Sigmoid colon (tissue), 7 donors: ENCODE measurements at regions of chr17 and their contacts with region 1.

Region 1: DNA sequence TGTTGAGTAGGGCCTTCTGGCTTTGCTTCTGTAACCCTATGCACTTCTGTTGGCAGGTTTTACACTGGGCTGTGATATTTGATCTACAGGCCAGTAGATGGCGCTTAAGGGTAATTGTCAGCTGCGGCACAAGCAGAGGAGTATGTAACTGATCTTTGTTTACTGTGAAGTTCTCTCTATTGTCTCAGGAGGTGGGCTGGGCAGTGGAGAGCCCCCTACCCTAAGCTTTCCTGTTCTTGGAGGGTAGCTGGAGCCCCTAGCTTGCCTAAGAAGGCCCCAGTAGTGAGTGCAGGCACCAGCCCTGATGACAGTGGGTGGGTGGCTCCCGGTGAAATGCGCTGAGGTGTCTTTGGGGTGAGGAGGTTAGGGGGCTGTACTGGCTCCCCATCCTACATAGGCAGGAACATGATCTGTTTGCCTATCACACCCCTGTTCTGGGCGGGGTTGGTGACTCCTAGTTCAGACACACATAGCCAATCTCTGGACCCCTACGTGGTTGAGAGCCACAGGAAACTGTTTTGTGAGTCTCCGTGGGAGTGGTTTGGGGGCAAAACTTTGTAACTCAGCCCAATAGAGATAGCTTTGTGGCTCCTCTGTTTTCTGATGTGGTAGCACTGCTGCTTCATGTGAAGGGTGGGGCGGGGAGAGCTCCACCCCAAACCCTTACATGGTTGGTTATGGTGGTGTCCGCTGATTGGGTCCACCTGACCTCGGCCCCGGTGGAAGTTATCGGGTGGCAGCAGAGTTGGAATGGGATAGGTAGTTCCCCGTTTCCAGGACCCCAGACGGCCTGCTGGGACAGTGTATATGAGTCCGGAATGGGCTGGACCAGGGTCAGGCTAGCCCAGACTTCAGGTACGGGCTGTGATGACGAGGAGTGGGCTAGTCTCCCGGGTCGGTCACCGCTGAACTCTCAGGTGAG is 60.4 kb downstream of the SLFN11 start:
- DNase-seq: peak; percentile 75
- H3K4me3 ChIP-seq: peak overlapping the region in 3 of 4 donors; percentile 30 to 40 (median 34)
- H3K27ac ChIP-seq: peak overlapping the region in 3 of 4 donors; percentile 10 to 53 (median 43)
- H3K4me1 ChIP-seq: peaks cover 0 to 30% (median 26%) of the 10 kb centered on the region in 4 donors
- H3K27me3 ChIP-seq: peaks cover 0 to 8% (median 0%) of the 10 kb centered on the region in 3 donors
- CTCF ChIP-seq: peak; percentile 65 to 75 (median 71)
- EP300 ChIP-seq: no peak
- POLR2A ChIP-seq: no peak

Region 2: GRCh38 chr17:35170968-35171771 is 141.9 kb before region 1 on chr17:
- intact Hi-C with region 1: loop called (anchors 5 kb)
- DNase-seq: no peak
- H3K4me3 ChIP-seq: no peak overlapping the region
- H3K27ac ChIP-seq: no peak overlapping the region
- H3K4me1 ChIP-seq: no peaks in the 10 kb centered on the region
- H3K27me3 ChIP-seq: no peaks in the 10 kb centered on the region
- CTCF ChIP-seq: peak in 3 of 4 experiments; percentile 7 to 26 (median 16)
- EP300 ChIP-seq: no peak
- POLR2A ChIP-seq: no peak

Region 3: GRCh38 chr17:35432176-35433074 is 119.4 kb after region 1 on chr17 and contains the start of gene SLFN12:
- intact Hi-C with region 1: loop called (anchors 10 kb)
- DNase-seq: peak; percentile 87
- H3K4me3 ChIP-seq: peak within 1 kb of the TSS; percentile 43 to 62 (median 54)
- H3K27ac ChIP-seq: peak within 1 kb of the TSS; percentile 80 to 87 (median 85)
- H3K4me1 ChIP-seq: peaks cover 0 to 26% (median 20%) of the 10 kb centered on the region in 4 donors
- H3K27me3 ChIP-seq: no peaks in the 10 kb centered on the region
- CTCF ChIP-seq: no peak
- EP300 ChIP-seq: no peak
- POLR2A ChIP-seq: no peak
- total RNA-seq, gene SLFN12: 6.4 to 19.9 (median 10.2) TPM

Region 4: DNA sequence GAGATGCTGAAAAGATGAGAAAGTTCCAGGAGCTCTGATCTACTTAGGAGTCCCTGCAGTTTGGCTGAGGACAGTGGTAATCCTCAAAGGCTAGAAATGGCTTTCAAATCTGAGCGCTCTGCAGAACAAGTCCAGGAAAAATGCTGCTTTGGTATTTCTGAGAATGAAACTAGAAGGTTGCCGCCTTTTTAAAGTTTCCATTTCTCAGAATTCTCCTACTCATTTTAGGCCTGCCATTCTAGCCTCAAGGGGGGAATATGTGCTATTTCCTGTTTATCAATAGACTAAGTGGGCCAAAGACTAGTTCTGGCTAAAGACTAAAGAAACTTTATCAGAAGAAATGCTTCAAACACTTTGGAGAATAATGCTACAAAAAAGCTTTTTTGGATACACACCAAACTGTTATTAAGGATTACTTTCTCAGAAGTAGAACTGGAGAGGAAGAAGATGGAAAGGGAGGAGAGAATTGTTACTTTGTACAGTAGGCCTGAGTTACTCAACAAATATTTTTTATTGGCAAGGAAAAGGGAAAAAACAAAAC is 224.6 kb after region 1 on chr17 and contains the start of gene SLFN12L:
- intact Hi-C with region 1: loop called (anchors 2 kb)
- DNase-seq: no peak
- H3K4me3 ChIP-seq: no peak within 1 kb of the TSS
- H3K27ac ChIP-seq: peak within 1 kb of the TSS in 2 of 4 donors; percentile 16 to 39
- H3K4me1 ChIP-seq: peaks cover 0 to 22% (median 0%) of the 10 kb centered on the region in 4 donors
- H3K27me3 ChIP-seq: no peaks in the 10 kb centered on the region
- CTCF ChIP-seq: no peak
- EP300 ChIP-seq: no peak
- POLR2A ChIP-seq: no peak
- total RNA-seq, gene SLFN12L: 0.27 to 1.2 (median 0.63) TPM

Region 5: GRCh38 chr17:36183001-36183971 is 870.2 kb after region 1 on chr17:
- intact Hi-C with region 1: no loop called
- DNase-seq: peak; percentile 79
- H3K4me3 ChIP-seq: peak overlapping the region; percentile 36 to 63 (median 52)
- H3K27ac ChIP-seq: peak overlapping the region; percentile 5 to 73 (median 44)
- H3K4me1 ChIP-seq: peaks cover 0 to 30% (median 15%) of the 10 kb centered on the region in 4 donors
- H3K27me3 ChIP-seq: peaks cover 0 to 30% (median 29%) of the 10 kb centered on the region in 3 donors
- CTCF ChIP-seq: no peak
- EP300 ChIP-seq: no peak
- POLR2A ChIP-seq: no peak